Activated naive CD4-positive, alpha-beta T cell treated with anti-CD3 and anti-CD28 coated beads for 36 hours (primary cell): ENCODE measurements at regions of chr1 and their contacts with region 1.

Region 1: DNA sequence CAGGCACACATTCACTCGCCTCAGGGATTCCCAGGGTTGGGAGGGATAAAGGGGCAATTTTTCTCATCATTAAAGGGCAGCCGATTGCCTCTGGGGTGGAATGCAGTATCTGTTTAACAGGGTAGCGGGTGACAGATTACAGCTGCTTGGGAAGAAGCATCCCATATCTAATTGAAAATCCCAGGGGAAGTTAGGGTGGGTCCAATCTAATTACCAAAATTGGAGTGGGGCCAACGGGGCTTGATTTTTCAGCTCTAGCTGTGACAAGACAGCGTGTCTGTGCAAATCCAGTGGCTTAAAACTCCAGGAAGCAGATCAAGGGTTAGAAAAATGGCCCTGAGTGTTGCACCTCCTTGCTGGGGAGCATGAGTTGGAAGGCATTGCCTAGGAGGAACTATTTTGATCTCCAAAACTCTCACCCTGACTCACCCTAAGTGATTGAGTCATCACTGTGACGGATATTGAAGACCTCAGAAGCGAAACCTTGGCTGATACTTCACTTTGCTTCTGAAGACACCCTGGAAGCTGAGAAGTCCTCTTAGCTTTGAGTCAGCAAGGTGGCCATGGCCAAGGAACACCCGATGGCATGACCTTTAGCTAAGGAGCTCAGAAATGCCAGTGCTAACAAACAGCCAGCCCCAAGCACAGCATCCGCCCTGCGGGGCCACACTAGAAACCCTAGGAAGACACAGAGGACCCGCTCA is 46.0 kb downstream of the GRHL3 start:
- DNase-seq: peak; percentile 63
- H3K4me3 Mint-ChIP-seq: no peak overlapping the region
- H3K27ac Mint-ChIP-seq: no peak overlapping the region
- H3K4me1 Mint-ChIP-seq: peaks cover 12% of the 10 kb centered on the region
- H3K27me3 Mint-ChIP-seq: no peaks in the 10 kb centered on the region

Region 2: DNA sequence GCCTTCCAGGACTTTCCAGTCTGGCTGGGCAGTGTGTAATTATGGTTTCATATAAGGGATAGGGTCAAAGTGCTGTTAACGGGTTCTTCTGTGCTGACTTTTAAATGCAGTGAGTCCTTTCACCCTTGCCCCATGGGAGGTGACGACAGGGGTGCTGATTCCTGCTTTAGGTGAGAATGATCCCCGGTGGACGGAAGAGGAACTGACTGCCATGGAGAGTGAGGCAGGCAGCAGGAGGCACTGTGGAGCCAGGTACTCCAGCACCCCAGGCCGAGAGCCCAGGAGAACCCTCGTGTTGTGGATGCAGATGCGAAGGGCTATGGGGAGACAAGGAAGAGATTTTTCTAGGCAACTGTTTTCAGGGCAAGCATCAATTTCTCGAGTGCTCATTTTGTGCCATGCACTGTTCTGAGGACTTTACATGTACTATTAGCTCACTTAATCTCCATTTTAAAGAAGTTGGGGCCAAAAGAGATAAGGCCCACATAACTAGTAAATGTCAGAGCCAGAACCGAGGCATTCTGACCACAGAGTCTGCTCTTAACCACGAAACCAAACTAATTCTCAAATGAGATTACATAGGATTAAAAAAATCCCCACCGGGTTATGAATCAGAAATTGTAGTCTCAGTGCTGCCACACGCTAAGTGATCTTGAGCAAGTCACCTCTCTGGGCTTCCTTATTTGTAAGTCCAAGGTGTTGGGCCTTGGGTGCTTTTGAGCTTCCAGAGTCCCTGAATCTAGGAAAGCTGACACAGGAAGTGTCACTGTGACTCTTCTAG is 20.2 kb after region 1 on chr1:
- CTCF ChIA-PET with region 1: interaction called, 4 read pairs
- intact Hi-C with region 1: loop called (anchors 1 kb)
- DNase-seq: peak; percentile 71
- H3K4me3 Mint-ChIP-seq: no peak overlapping the region
- H3K27ac Mint-ChIP-seq: no peak overlapping the region
- H3K4me1 Mint-ChIP-seq: peaks cover 21% of the 10 kb centered on the region
- H3K27me3 Mint-ChIP-seq: no peaks in the 10 kb centered on the region